ENCODE measurements at regions of chr19 and their contacts with region 1.

Region 1: DNA sequence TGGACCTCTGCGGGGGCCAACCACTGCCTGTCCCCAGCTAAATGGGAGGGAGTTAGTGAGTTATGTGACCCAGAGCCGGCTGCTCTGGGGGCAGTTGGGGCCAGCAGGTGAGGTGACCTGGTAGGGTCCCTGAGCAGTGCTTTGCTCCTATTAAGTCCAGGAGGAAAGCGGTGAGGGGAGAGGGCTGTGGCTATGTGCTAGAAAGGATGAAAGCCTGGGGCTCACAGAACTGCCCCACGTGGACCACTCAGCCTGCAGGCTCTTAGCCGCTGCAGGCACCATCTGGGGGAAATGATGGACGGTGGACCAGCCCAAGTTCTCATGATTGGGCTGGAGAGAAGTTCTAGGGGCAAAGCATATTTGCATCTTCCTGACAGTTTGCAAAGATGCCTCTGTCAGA is 67.6 kb upstream of the ZNF536 start:
- DNase-seq: no peak
- ATAC-seq: no peak
- H3K4me3 ChIP-seq: no peak overlapping the region
- H3K27ac ChIP-seq: no peak overlapping the region
- H3K4me1 ChIP-seq: no peaks in the 10 kb centered on the region
- H3K27me3 ChIP-seq: peaks cover 0 to 2% (median 0%) of the 10 kb centered on the region in 3 donors
- CTCF ChIP-seq: no peak

Region 2: DNA sequence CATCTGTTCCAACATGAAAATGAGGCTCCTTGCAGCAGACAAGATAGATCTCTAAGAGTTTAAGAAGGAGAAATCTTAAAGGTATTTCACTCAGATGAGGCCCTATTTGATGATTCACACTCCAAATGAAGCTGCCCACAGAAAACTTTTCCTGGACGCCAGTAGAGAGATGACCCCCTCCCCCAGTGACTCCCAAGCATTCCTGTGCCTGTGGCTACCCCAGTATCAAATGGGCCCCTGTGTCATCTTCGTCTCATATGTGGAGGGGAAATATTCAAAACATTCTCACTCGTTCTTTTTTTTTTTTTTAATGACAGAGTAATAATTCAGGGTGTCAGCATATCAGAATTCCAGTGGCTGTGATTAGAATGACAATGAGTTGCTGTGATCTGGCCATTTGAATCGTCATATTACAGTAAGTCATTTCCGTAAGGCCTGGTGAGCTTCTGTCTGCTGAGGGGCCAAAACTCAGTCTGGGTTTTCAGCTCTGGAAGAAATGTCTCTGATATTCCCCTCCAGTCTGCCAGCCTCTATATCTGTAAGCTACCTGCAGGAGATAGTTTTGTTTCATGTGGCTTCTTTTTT is 167.8 kb before region 1 on chr19:
- intact Hi-C with region 1: no loop called
- DNase-seq: no peak
- ATAC-seq: no peak
- H3K4me3 ChIP-seq: no peak overlapping the region
- H3K27ac ChIP-seq: no peak overlapping the region
- H3K4me1 ChIP-seq: no peaks in the 10 kb centered on the region
- H3K27me3 ChIP-seq: no peaks in the 10 kb centered on the region
- CTCF ChIP-seq: no peak

Region 3: GRCh38 chr19:30245401-30246039 is 59.0 kb before region 1 on chr19:
- intact Hi-C with region 1: loop called in 1 of 2 experiments (anchors 1 kb)
- DNase-seq: no peak
- ATAC-seq: no peak
- H3K4me3 ChIP-seq: no peak overlapping the region
- H3K27ac ChIP-seq: no peak overlapping the region
- H3K4me1 ChIP-seq: no peaks in the 10 kb centered on the region
- H3K27me3 ChIP-seq: no peaks in the 10 kb centered on the region
- CTCF ChIP-seq: no peak